ENCODE measurements at regions of chr5 and their contacts with region 1.

Region 1: GRCh38 chr5:170267431-170268152 is 30.0 kb downstream of the LCP2 start:
- DNase-seq: peak; percentile 84
- ATAC-seq: peak; percentile 88
- H3K4me3 Mint-ChIP-seq: no peak overlapping the region
- H3K27ac Mint-ChIP-seq: no peak overlapping the region
- H3K4me1 Mint-ChIP-seq: peaks cover 57% of the 10 kb centered on the region
- H3K27me3 Mint-ChIP-seq: peaks cover 4% of the 10 kb centered on the region; the same call in 1 of the 2 replicates
- CTCF ChIP-seq: peak; percentile 81

Region 2: DNA sequence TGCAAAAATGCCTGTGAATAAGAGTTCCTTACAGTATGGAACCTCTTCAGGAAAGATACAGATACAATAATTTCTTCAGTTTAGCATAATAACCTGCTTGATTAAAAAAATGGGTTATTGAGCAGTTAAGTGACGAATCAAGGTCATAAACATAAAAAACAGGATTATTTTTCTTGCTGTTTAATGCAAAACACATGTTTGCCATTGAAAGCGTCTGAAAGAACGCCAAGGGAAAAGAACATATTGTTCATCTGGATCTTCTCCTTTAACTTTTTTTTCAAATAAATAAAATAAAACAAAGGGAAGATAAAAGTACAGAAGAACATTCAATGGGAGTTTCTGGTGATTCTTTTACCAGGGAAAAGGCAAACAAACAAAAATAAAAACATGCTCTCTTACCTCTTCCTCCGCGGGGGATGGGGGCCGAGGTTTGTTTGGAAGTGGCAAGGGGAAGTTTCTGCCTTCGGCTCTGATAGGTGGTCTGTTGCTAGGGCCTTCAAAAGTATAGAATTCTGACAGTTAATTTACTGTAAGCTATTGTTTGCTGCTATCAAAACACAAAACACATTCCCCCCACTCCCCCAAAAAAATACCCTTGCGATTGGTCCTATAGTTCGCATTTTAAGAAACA is 14.8 kb before region 1 on chr5:
- CTCF ChIA-PET with region 1: interaction called, 11 read pairs
- POLR2A ChIA-PET with region 1: interaction called, 3 read pairs
- DNase-seq: no peak
- ATAC-seq: no peak
- H3K4me3 Mint-ChIP-seq: peak overlapping the region; percentile 5
- H3K27ac Mint-ChIP-seq: peak overlapping the region; percentile 35; the same call in 1 of the 2 replicates
- H3K4me1 Mint-ChIP-seq: peaks cover 88% of the 10 kb centered on the region
- H3K27me3 Mint-ChIP-seq: no peaks in the 10 kb centered on the region; the same call in 1 of the 2 replicates
- CTCF ChIP-seq: no peak

Region 3: DNA sequence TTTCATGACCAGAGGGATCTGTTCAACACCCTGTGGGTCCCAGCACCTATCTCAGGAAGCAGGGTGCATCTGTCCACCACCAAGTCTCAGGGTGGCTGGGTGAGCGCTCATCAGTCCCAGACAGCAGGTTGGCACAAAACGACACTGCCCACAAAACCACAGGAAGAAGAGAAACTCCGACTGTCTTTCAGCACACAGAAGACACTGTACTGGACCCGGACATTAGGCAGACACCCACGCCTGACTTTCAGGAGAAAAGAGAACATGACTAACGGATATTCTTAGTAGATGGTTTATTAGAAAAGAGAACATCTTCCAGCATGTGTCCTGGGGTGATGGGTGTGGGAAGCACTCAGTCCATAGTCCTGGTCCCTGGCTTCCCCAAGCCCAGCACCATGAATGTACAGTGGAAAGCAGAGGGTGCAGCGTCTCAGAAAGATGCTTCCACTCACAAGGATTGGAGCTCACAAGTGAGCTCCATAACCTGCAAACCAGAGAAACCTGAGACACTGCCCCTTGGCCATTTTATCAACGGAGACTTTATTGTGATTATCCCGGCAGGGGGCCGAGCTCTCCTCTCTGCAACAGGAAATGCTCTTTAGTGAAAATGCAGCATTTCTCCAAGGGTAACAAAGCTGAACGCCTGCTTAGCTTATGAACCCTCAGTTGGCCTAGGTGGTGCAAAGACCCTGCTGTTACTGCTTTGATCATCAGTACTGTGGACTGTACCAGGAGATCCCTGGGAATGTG is 65.7 kb after region 1 on chr5:
- CTCF ChIA-PET with region 1: interaction called, 89 read pairs
- POLR2A ChIA-PET with region 1: no interaction called
- DNase-seq: peak; percentile 61
- ATAC-seq: peak; percentile 40
- H3K4me3 Mint-ChIP-seq: peak overlapping the region; percentile 47
- H3K27ac Mint-ChIP-seq: peak overlapping the region; percentile 96
- H3K4me1 Mint-ChIP-seq: peaks cover 75% of the 10 kb centered on the region
- H3K27me3 Mint-ChIP-seq: no peaks in the 10 kb centered on the region; the same call in 1 of the 2 replicates
- CTCF ChIP-seq: no peak

Region 4: GRCh38 chr5:170338933-170339779 is 71.6 kb after region 1 on chr5:
- CTCF ChIA-PET with region 1: interaction called, 89 read pairs
- POLR2A ChIA-PET with region 1: no interaction called
- DNase-seq: peak; percentile 64
- ATAC-seq: peak; percentile 84
- H3K4me3 Mint-ChIP-seq: no peak overlapping the region
- H3K27ac Mint-ChIP-seq: no peak overlapping the region
- H3K4me1 Mint-ChIP-seq: peaks cover 58% of the 10 kb centered on the region
- H3K27me3 Mint-ChIP-seq: no peaks in the 10 kb centered on the region; the same call in none of the 2 replicates
- CTCF ChIP-seq: peak; percentile 63

Region 5: GRCh38 chr5:170348137-170348633 is 80.6 kb after region 1 on chr5:
- CTCF ChIA-PET with region 1: interaction called, 15 read pairs
- POLR2A ChIA-PET with region 1: no interaction called
- DNase-seq: no peak
- ATAC-seq: no peak
- H3K4me3 Mint-ChIP-seq: no peak overlapping the region
- H3K27ac Mint-ChIP-seq: no peak overlapping the region
- H3K4me1 Mint-ChIP-seq: peaks cover 46% of the 10 kb centered on the region
- H3K27me3 Mint-ChIP-seq: peaks cover 7% of the 10 kb centered on the region
- CTCF ChIP-seq: no peak

Measured in WTC11 (cell line).